ENCODE measurements at regions of chr6 and their contacts with region 1.

Region 1: GRCh38 chr6:75526502-75527127 is 33.0 kb upstream of the FILIP1 start:
- DNase-seq: no peak
- ATAC-seq: peak; percentile 81

Region 2: DNA sequence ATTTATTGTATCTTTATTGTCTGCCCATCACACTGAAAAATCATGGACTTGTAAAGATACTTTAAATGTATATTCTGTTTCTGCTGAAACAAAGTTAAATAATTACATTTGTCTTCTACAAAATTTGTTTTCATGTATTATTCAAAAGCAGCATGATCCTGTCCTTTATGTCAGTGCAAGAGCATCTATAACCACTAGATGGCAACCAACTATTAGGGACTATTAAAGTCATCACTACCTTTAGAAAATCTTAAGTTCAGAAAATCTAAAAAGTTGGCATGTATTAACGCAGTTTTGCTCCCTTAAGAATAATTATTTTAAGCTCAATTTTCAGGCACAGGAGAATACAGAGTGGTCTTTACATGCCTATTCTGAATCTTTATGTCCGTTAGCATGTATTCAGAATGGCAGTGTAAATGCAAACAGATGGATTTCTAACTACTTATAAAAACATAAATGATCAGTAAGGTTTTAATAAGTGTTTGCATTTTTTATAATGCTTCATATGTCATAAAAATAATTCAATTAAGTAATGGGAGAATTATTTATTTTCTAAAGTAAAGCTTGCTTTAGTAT is 259.8 kb before region 1 on chr6:
- intact Hi-C with region 1: loop called (anchors 1 kb)
- DNase-seq: no peak
- ATAC-seq: peak; percentile 65

Region 3: DNA sequence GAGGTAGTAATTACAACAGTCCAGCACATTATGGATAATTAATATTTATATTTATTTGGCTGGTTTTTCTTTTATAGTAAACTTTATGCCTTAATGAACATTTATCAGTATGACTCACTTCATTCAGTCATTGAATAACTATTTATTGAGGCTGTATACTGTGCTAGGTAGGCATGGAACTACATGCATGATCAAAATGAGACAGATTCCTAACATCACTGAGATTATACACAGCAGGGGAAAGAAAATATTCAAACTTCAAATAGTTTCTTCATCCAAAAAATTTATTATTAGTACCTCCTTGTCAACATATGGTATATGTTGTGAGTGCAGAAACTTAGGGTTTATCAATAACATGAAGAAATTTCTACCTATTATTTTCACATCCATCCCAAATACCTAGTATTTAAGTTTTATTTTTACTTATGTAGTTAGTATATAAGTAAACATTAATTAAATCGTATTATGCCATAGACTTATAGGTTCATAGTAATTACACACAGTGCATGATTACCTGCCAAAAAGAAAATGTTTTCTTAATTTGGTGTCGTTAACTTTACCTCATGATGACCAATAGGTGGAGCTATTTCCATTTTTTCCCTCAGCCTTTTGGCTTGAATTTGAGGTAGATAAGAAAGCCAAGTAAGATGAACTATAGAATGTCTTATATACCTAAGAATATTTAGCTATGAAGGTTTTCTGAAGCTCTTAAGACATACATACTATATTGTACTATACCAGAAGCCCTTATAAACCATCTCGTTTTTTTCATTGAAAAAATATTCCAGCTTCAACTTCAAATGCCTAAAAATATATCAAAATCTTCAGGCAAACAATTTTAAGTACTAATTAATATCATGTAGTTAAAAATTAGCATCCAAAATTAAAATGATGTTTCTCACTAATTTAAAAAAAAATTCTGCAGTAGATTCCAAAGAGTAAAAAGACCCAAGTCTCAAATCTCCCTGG is 229.5 kb before region 1 on chr6:
- intact Hi-C with region 1: loop called (anchors 2 kb)
- DNase-seq: no peak
- ATAC-seq: no peak